Panc1 (cell line): ENCODE measurements at regions of chr6 and their contacts with region 1.

Region 1: GRCh38 chr6:41373919-41374617 is 38.7 kb downstream of the NCR2 start:
- DNase-seq: no peak
- ATAC-seq: peak; percentile 49
- H3K4me3 ChIP-seq: peak overlapping the region in 1 of 2 experiments; percentile 4; a peak in 1 of 4 replicates
- H3K27ac ChIP-seq: no peak overlapping the region
- H3K4me1 ChIP-seq: 0 out of 2 replicates have a peak, but pooled peaks cover 5% of the 10 kb centered on the region
- H3K27me3 ChIP-seq: peaks cover 29% of the 10 kb centered on the region
- CTCF ChIP-seq: no peak

Region 2: GRCh38 chr6:41591859-41592502 is 217.9 kb after region 1 on chr6:
- CTCF ChIA-PET with region 1: interaction called, 12 read pairs
- POLR2A ChIA-PET with region 1: no interaction called
- in situ Hi-C with region 1: no loop called
- intact Hi-C with region 1: no loop called
- DNase-seq: peak; percentile 46
- ATAC-seq: peak; percentile 82
- H3K4me3 ChIP-seq: no peak overlapping the region
- H3K27ac ChIP-seq: no peak overlapping the region
- H3K4me1 ChIP-seq: no peaks in the 10 kb centered on the region
- H3K27me3 ChIP-seq: no peaks in the 10 kb centered on the region
- CTCF ChIP-seq: peak; percentile 95